ENCODE measurements at regions of chr17 and their contacts with region 1.

Region 1: DNA sequence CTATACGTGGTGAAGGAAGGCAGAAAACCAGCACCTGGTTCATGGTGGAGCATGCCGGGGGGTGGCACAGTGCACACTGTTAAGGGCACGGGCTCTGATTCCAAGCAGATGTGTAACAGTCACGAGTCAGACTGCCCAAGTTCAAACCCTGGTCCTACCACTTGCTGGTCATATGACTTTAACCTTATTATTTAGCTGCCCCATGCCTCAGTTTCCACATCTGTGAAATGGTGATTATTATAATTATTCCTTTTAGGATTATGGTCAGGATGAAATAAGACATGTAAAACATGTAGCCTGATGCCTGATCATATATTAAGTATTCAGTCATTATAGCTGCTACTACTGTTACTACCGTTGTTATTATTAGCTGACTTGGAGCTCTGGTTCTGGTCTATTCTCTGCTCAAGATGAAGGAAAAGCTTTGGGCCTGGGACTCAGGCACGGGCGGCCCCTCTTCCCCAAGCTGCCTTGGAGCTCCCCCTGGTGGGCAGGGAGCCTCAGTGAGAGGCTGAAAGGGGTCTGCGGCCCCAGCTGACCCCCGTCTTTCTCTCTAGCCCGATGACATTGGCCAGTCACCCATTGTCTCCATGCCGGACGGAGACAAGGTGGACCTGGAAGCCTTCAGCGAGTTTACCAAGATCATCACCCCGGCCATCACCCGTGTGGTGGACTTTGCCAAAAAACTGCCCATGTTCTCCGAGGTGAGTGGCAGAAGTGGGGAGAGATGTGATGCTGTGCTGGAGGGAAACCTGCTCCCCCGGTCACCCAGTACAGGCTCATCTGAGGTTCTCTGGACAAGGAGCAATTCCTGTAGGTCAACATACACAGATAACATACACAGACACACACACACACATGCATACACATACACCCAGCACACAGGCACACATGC is 14.0 kb downstream of the NR1D1 start:
- DNase-seq: peak; percentile 71
- ATAC-seq: peak; percentile 78
- H3K4me3 Mint-ChIP-seq: no peak overlapping the region
- H3K27ac Mint-ChIP-seq: peak overlapping the region; percentile 55
- H3K4me1 Mint-ChIP-seq: peaks cover 8% of the 10 kb centered on the region
- H3K27me3 Mint-ChIP-seq: no peaks in the 10 kb centered on the region
- CTCF ChIP-seq: peak; percentile 95

Region 2: DNA sequence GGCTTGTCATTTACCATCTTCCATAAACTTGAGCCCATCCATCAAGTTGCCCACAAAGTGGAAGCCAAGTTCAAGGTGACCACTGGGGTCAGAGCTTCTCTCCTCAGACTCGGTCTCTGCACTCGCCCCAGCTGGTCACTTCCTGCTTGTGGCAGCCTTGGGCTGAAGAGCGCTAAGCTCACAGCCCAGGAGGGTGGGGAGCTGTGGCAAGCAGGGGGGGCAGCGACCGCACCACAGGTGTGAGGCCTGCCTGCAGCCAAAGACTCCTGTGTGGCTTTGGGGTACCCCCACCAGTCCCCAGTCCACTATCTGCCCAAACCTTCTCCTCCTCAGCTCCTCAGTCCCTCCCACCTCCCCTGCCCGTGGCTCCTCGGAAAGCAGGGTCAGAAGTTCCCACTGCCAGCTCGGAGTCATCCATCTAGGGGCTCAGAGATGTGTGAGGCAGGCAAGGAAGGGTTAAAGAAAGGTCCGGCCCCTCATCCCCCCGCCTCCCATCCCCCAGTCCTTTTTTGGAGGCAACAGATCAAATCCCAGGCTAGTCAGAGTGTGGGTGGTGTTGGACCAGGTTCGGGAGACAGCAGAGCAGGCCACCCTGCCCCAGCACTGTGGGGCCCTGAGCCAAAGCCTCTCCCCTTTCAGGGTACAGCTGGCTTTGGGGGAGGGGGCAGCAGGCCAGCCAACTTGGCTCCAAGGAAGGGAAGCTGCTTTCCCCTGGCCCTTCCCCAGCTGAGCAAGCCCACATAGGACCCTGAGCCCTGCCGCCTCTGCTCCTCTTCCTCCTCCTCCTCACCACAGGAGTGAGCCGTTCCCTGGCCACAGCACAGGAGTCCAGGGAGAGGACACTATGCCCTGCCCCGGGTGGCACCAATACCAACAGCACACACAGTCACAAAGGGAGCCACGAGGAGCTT is 67.9 kb before region 1 on chr17:
- CTCF ChIA-PET with region 1: interaction called, 39 read pairs
- POLR2A ChIA-PET with region 1: no interaction called
- intact Hi-C with region 1: no loop called
- DNase-seq: no peak
- ATAC-seq: no peak
- H3K4me3 Mint-ChIP-seq: no peak overlapping the region
- H3K27ac Mint-ChIP-seq: no peak overlapping the region
- H3K4me1 Mint-ChIP-seq: no peaks in the 10 kb centered on the region
- H3K27me3 Mint-ChIP-seq: no peaks in the 10 kb centered on the region
- CTCF ChIP-seq: no peak

Region 3: DNA sequence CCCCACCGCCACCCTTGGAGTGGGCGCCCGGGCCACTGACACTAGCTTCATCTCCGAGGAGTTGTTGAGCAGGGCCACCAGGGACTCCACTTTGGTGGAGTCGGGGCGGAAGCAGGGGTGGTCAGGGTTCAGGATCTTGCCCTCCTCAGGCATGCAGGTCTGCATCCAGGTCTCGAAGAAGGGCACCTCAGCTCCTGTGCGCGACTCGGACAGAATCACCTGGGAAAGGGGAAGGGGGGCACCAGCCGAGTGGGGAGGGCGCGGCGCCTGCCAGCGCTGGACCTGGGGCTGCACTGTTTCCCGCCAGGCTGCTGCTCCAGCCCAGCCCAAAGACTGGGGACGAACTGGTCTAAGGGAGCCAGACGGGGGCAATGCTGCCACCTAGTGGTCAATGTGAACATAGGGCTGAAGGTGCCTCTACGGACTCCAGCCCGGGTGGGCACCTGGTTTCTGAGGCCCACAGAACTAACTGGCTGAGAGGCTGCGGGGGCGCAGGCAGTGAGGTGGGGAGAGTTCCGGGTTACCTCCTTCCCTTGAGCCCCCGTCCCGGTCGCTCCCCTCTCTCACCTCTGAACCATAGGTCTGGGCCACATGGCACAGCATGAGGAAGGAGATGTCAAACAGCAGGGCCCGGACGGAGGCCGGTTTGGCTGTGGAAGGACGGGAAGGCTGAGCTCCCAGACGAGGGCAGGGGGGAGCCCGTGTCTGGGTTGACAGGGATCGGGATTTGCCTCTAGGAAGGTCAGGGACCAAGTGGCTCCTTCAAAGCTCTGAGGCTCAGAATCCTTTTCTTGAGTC is 59.4 kb before region 1 on chr17:
- CTCF ChIA-PET with region 1: interaction called, 13 read pairs
- POLR2A ChIA-PET with region 1: no interaction called
- intact Hi-C with region 1: no loop called
- DNase-seq: peak; percentile 83
- ATAC-seq: peak; percentile 93
- H3K4me3 Mint-ChIP-seq: no peak overlapping the region
- H3K27ac Mint-ChIP-seq: no peak overlapping the region
- H3K4me1 Mint-ChIP-seq: peaks cover 16% of the 10 kb centered on the region
- H3K27me3 Mint-ChIP-seq: no peaks in the 10 kb centered on the region
- CTCF ChIP-seq: peak; percentile 92

Region 4: GRCh38 chr17:40038882-40039513 is 47.4 kb before region 1 on chr17:
- CTCF ChIA-PET with region 1: interaction called, 10 read pairs
- POLR2A ChIA-PET with region 1: no interaction called
- intact Hi-C with region 1: no loop called
- DNase-seq: no peak
- ATAC-seq: no peak
- H3K4me3 Mint-ChIP-seq: no peak overlapping the region
- H3K27ac Mint-ChIP-seq: no peak overlapping the region
- H3K4me1 Mint-ChIP-seq: no peaks in the 10 kb centered on the region
- H3K27me3 Mint-ChIP-seq: no peaks in the 10 kb centered on the region
- CTCF ChIP-seq: peak; percentile 28

Region 5: DNA sequence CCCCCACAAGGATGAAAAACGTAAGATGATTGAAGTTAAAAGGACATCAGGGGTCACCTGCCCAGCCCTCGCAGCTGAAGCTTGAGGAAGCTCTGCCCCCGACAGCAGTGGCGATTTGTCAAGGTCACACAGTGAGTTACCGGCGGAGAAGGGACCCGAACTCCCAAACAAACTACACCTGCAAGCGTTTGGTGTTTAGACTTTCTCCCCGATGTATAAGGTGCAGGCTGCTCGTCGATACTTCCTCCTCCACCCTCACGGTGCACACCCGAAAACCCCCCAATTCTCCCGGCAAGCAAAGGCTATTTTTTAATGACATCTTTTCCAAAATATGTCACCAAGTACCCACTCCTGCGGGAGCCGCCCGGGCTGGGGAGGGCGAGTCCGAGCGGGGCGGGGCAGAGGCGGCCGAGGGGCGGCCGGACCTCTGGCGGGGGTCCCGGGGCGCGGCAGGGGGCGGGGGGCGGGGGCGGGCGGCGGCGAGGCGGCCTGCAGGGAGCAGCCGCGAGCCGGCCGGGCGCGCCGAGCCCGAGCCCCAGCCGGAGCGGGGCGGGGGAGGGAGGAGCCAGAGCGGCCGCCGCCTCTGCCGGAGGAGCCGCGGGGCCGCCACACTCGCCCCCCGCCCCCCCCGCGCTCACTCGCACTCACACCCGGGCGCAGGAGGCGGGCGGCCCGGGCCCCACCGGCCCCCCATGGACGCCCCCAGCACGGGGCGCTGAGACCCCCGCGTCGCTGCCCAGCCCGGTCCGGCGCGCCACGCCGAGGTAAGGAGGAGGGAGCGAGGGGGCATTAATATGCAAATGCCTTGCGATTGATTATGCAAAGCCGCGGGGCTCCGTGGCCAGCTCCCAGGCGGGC is 23.8 kb before region 1 on chr17 and contains the start of gene THRA:
- CTCF ChIA-PET with region 1: interaction called, 25 read pairs
- POLR2A ChIA-PET with region 1: interaction called, 3 read pairs
- intact Hi-C with region 1: no loop called
- DNase-seq: peak; percentile 70
- ATAC-seq: peak; percentile 85
- H3K4me3 Mint-ChIP-seq: peak within 1 kb of the TSS; percentile 89
- H3K27ac Mint-ChIP-seq: peak within 1 kb of the TSS; percentile 84
- H3K4me1 Mint-ChIP-seq: peaks cover 43% of the 10 kb centered on the region
- H3K27me3 Mint-ChIP-seq: no peaks in the 10 kb centered on the region
- CTCF ChIP-seq: no peak
- total RNA-seq, gene THRA: 11.1 to 13.8 TPM

Region 6: GRCh38 chr17:40068917-40069750 is 17.3 kb before region 1 on chr17:
- CTCF ChIA-PET with region 1: interaction called, 96 read pairs
- POLR2A ChIA-PET with region 1: interaction called, 5 read pairs
- intact Hi-C with region 1: no loop called
- DNase-seq: peak; percentile 90
- ATAC-seq: peak; percentile 66
- H3K4me3 Mint-ChIP-seq: peak overlapping the region; percentile 78
- H3K27ac Mint-ChIP-seq: peak overlapping the region; percentile 96
- H3K4me1 Mint-ChIP-seq: peaks cover 79% of the 10 kb centered on the region
- H3K27me3 Mint-ChIP-seq: no peaks in the 10 kb centered on the region
- CTCF ChIP-seq: no peak

Region 7: GRCh38 chr17:40075201-40075941 is 11.0 kb before region 1 on chr17:
- CTCF ChIA-PET with region 1: interaction called, 96 read pairs
- POLR2A ChIA-PET with region 1: interaction called, 5 read pairs
- intact Hi-C with region 1: no loop called
- DNase-seq: peak; percentile 73
- ATAC-seq: peak; percentile 93
- H3K4me3 Mint-ChIP-seq: no peak overlapping the region
- H3K27ac Mint-ChIP-seq: peak overlapping the region; percentile 47
- H3K4me1 Mint-ChIP-seq: peaks cover 32% of the 10 kb centered on the region
- H3K27me3 Mint-ChIP-seq: no peaks in the 10 kb centered on the region
- CTCF ChIP-seq: peak; percentile 91

Region 8: GRCh38 chr17:40480501-40481003 is 394.2 kb after region 1 on chr17:
- CTCF ChIA-PET with region 1: no interaction called
- POLR2A ChIA-PET with region 1: no interaction called
- intact Hi-C with region 1: no loop called
- DNase-seq: peak; percentile 98
- ATAC-seq: peak; percentile 91
- H3K4me3 Mint-ChIP-seq: peak overlapping the region; percentile 74
- H3K27ac Mint-ChIP-seq: peak overlapping the region; percentile 98
- H3K4me1 Mint-ChIP-seq: peaks cover 59% of the 10 kb centered on the region
- H3K27me3 Mint-ChIP-seq: no peaks in the 10 kb centered on the region
- CTCF ChIP-seq: no peak